ENCODE measurements at regions of chr18 and their contacts with region 1.

Region 1: GRCh38 chr18:12934454-12935071 is 13.2 kb upstream of the SEH1L start:
- DNase-seq: peak; percentile 84
- ATAC-seq: peak; percentile 88
- H3K4me3 Mint-ChIP-seq: peak overlapping the region; percentile 5
- H3K27ac Mint-ChIP-seq: no peak overlapping the region
- H3K4me1 Mint-ChIP-seq: peaks cover 9% of the 10 kb centered on the region
- H3K27me3 Mint-ChIP-seq: peaks cover 10% of the 10 kb centered on the region

Region 2: GRCh38 chr18:12744103-12744502 is 190.5 kb before region 1 on chr18:
- CTCF ChIA-PET with region 1: interaction called, 51 read pairs
- POLR2A ChIA-PET with region 1: no interaction called
- DNase-seq: no peak
- ATAC-seq: peak; percentile 63
- H3K4me3 Mint-ChIP-seq: no peak overlapping the region
- H3K27ac Mint-ChIP-seq: no peak overlapping the region
- H3K4me1 Mint-ChIP-seq: peaks cover 2% of the 10 kb centered on the region
- H3K27me3 Mint-ChIP-seq: no peaks in the 10 kb centered on the region

Region 3: GRCh38 chr18:12883684-12884405 is 50.7 kb before region 1 on chr18 and contains the start of gene PTPN2:
- CTCF ChIA-PET with region 1: interaction called, 20 read pairs
- POLR2A ChIA-PET with region 1: no interaction called
- DNase-seq: peak; percentile 95
- ATAC-seq: peak; percentile 88
- H3K4me3 Mint-ChIP-seq: peak within 1 kb of the TSS; percentile 95
- H3K27ac Mint-ChIP-seq: peak within 1 kb of the TSS; percentile 91
- H3K4me1 Mint-ChIP-seq: peaks cover 58% of the 10 kb centered on the region
- H3K27me3 Mint-ChIP-seq: no peaks in the 10 kb centered on the region
- total RNA-seq, gene PTPN2: 52.9 to 53.6 TPM

Region 4: GRCh38 chr18:12904012-12904516 is 30.5 kb before region 1 on chr18:
- CTCF ChIA-PET with region 1: interaction called, 10 read pairs
- POLR2A ChIA-PET with region 1: no interaction called
- DNase-seq: peak; percentile 84
- ATAC-seq: peak; percentile 76
- H3K4me3 Mint-ChIP-seq: peak overlapping the region; percentile 59
- H3K27ac Mint-ChIP-seq: peak overlapping the region; percentile 84
- H3K4me1 Mint-ChIP-seq: peaks cover 8% of the 10 kb centered on the region
- H3K27me3 Mint-ChIP-seq: peaks cover 14% of the 10 kb centered on the region

Region 5: DNA sequence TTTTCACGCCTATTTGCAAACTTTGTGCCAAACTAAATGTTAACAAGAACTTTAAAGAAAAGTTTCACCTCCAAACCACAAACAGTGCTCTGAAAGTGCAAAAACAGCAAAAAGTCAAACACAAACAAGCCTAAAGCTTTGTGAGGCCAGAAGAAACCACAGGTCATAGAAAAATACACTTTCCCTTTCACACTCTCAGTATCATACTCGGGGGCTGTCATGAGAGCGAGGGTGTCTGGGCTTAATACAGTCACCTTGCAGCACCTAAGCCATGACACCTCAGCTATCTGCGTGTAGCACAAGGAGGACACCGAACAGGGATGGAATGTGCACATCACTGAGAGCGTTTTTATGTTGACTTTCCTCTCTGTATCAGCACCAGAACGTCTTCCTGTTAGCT is 13.4 kb before region 1 on chr18:
- CTCF ChIA-PET with region 1: interaction called, 29 read pairs
- POLR2A ChIA-PET with region 1: interaction called, 3 read pairs
- DNase-seq: peak; percentile 50
- ATAC-seq: peak; percentile 90
- H3K4me3 Mint-ChIP-seq: peak overlapping the region; percentile 22
- H3K27ac Mint-ChIP-seq: peak overlapping the region; percentile 67
- H3K4me1 Mint-ChIP-seq: peaks cover 18% of the 10 kb centered on the region
- H3K27me3 Mint-ChIP-seq: peaks cover 6% of the 10 kb centered on the region

Measured in activated CD8-positive, alpha-beta T cell treated with anti-CD3 and anti-CD28 coated beads, Interleukin-2, amount 10 ng/mL, durations not matched to agents 7 days and 5 days (primary cell).